ENCODE measurements at regions of chr20 and their contacts with region 1.

Region 1: DNA sequence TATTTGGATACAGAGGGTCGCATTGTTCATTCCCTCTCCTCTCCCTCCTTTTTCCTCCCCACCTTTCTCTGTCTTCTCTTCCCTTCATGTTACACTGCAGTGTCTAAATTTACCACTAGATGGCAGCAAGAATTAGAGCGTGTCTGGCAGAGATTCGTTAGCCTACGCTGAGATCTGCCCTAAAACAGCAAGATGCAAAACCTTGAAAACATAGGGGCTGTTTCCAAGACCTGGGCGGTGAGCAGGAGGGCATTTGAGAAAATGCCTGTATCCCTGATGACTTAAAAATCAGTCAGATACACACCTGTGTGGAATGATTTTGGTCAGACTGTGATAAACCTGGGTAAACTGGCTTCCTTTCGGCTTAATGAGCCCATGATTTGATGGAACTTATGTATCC is 101.5 kb upstream of the ISM1 start:
- DNase-seq: no peak
- ATAC-seq: peak; percentile 77
- H3K4me3 ChIP-seq: no peak overlapping the region
- H3K27ac ChIP-seq: no peak overlapping the region
- H3K4me1 ChIP-seq: no peaks in the 10 kb centered on the region
- H3K27me3 ChIP-seq: no peaks in the 10 kb centered on the region
- CTCF ChIP-seq: peak; percentile 78 to 93 (median 81)
- EP300 ChIP-seq: no peak
- POLR2A ChIP-seq: no peak
- RAD21 ChIP-seq: peak; percentile 95

Region 2: DNA sequence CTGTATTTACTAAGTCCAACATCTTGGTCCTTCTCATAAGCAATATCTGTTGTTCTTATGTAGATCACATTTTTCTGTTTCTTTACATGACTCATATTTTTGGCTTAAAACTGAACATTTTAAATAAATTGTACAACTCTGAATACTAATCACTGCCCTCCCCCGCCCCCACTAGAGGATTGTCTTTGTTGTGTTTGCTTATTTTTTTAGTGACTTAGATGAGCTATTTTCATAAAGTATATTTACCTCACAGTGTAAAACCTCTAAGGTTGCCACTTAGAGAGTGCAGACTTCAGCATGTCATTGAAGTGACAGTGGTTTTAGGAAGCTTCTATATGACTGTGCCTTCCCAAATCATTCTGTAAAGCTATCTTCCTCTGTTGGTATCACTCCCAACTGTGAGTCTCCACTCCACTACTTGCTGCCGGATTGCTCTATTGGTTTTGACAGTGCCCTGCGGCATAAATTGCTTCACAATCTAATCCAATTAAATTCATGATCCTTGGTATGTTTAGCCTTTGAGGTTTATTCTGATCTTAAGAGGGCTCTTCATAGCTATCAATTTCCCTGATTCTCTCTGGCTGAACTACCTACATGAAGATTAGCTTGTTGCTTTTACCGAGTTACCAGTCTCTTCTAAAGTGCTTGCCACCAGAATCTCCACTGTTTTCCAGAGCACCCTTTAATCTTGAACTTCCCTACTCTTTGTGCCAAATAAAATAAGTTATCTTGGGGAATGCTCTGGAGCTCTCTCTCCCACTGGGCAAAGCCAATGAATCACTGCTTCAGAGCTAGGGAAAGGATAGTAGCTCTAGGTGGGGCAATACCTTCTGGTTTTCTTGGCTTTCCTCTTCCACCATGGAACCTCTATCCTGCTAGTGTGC is 77.8 kb before region 1 on chr20:
- CTCF ChIA-PET with region 1: no interaction called
- POLR2A ChIA-PET with region 1: no interaction called
- RAD21 ChIA-PET with region 1: no interaction called
- SMC1A ChIA-PET with region 1: no interaction called
- in situ Hi-C with region 1: no loop called
- intact Hi-C with region 1: no loop called
- DNase-seq: no peak
- ATAC-seq: no peak
- H3K4me3 ChIP-seq: no peak overlapping the region
- H3K27ac ChIP-seq: no peak overlapping the region
- H3K4me1 ChIP-seq: no peaks in the 10 kb centered on the region
- H3K27me3 ChIP-seq: no peaks in the 10 kb centered on the region
- CTCF ChIP-seq: no peak
- EP300 ChIP-seq: no peak
- POLR2A ChIP-seq: no peak
- RAD21 ChIP-seq: no peak

Region 3: GRCh38 chr20:13261460-13262301 is 142.1 kb after region 1 on chr20:
- CTCF ChIA-PET with region 1: interaction called, 57 read pairs
- POLR2A ChIA-PET with region 1: no interaction called
- RAD21 ChIA-PET with region 1: interaction called, 7 read pairs
- SMC1A ChIA-PET with region 1: interaction called, 9 read pairs
- in situ Hi-C with region 1: no loop called
- intact Hi-C with region 1: loop called (anchors 1 kb)
- DNase-seq: no peak
- ATAC-seq: peak; percentile 94
- H3K4me3 ChIP-seq: no peak overlapping the region
- H3K27ac ChIP-seq: no peak overlapping the region
- H3K4me1 ChIP-seq: no peaks in the 10 kb centered on the region
- H3K27me3 ChIP-seq: no peaks in the 10 kb centered on the region
- CTCF ChIP-seq: peak; percentile 54 to 76 (median 75)
- EP300 ChIP-seq: no peak
- POLR2A ChIP-seq: no peak
- RAD21 ChIP-seq: peak; percentile 71

Region 4: GRCh38 chr20:13312300-13312699 is 192.7 kb after region 1 on chr20:
- CTCF ChIA-PET with region 1: interaction called, 3 read pairs
- POLR2A ChIA-PET with region 1: no interaction called
- RAD21 ChIA-PET with region 1: no interaction called
- SMC1A ChIA-PET with region 1: interaction called, 12 read pairs
- in situ Hi-C with region 1: no loop called
- intact Hi-C with region 1: no loop called
- DNase-seq: no peak
- ATAC-seq: peak; percentile 73
- H3K4me3 ChIP-seq: no peak overlapping the region
- H3K27ac ChIP-seq: no peak overlapping the region
- H3K4me1 ChIP-seq: no peaks in the 10 kb centered on the region
- H3K27me3 ChIP-seq: no peaks in the 10 kb centered on the region
- CTCF ChIP-seq: no peak
- EP300 ChIP-seq: no peak
- POLR2A ChIP-seq: no peak
- RAD21 ChIP-seq: no peak

Region 5: DNA sequence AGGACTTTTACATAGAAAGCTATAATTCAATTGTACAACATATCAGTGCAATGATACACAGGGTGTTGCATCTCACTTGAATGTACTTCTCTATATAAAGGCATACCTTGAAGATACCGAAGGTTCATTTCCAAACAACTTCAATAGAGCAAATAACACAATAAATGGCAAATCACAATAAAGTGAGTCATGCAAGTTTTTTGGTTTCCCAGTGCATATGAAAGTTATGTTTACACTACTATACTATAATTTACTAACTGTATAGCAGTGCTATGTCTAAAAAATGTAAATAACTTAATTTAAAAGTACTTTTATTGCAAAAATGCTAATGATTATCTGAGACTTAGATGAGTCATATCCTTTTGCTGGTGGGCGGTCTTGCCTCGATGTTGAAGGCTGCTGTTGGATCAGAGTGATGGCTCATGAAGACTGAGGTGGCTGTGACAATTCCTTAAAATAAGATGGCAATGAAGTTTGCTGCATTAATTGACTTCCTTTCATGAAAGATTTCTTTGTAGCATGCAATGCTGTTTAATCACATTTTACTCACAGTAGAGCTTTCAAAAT is 330.4 kb after region 1 on chr20:
- CTCF ChIA-PET with region 1: no interaction called
- POLR2A ChIA-PET with region 1: no interaction called
- RAD21 ChIA-PET with region 1: no interaction called
- SMC1A ChIA-PET with region 1: no interaction called
- in situ Hi-C with region 1: no loop called
- intact Hi-C with region 1: loop called (anchors 10 kb)
- DNase-seq: no peak
- ATAC-seq: no peak
- H3K4me3 ChIP-seq: no peak overlapping the region
- H3K27ac ChIP-seq: no peak overlapping the region
- H3K4me1 ChIP-seq: no peaks in the 10 kb centered on the region
- H3K27me3 ChIP-seq: no peaks in the 10 kb centered on the region
- CTCF ChIP-seq: no peak
- EP300 ChIP-seq: no peak
- POLR2A ChIP-seq: no peak
- RAD21 ChIP-seq: no peak

Region 6: DNA sequence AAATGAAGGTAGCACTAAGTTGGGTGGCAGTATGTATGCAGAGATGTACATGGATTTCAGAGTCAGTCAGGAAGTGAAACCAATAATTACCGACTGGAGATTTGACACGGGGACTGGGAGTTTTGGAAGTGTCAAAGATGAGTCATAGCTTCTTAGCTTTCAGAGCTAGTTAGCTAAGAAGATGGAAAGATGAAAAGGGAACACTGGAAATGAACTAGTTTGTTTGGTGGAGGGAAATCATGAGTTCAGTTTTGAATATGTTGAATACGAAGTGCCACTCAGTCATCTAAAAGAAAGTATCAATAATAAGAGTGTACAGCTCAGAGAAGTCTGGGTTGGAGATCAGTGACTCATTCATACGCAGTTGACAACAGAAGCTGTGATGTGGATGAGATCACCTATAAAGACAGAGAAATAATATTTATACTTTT is 657.6 kb after region 1 on chr20:
- CTCF ChIA-PET with region 1: interaction called, 14 read pairs
- POLR2A ChIA-PET with region 1: no interaction called
- RAD21 ChIA-PET with region 1: interaction called, 6 read pairs
- SMC1A ChIA-PET with region 1: interaction called, 15 read pairs
- in situ Hi-C with region 1: loop called (anchors 5 kb)
- intact Hi-C with region 1: loop called (anchors 5 kb)
- DNase-seq: no peak
- ATAC-seq: peak; percentile 57
- H3K4me3 ChIP-seq: no peak overlapping the region
- H3K27ac ChIP-seq: peak overlapping the region; percentile 15; the same call in 1 of the 2 replicates
- H3K4me1 ChIP-seq: peaks cover 13% of the 10 kb centered on the region; the same call in 1 of the 2 replicates
- H3K27me3 ChIP-seq: no peaks in the 10 kb centered on the region
- CTCF ChIP-seq: no peak
- EP300 ChIP-seq: no peak
- POLR2A ChIP-seq: no peak
- RAD21 ChIP-seq: no peak

Region 7: DNA sequence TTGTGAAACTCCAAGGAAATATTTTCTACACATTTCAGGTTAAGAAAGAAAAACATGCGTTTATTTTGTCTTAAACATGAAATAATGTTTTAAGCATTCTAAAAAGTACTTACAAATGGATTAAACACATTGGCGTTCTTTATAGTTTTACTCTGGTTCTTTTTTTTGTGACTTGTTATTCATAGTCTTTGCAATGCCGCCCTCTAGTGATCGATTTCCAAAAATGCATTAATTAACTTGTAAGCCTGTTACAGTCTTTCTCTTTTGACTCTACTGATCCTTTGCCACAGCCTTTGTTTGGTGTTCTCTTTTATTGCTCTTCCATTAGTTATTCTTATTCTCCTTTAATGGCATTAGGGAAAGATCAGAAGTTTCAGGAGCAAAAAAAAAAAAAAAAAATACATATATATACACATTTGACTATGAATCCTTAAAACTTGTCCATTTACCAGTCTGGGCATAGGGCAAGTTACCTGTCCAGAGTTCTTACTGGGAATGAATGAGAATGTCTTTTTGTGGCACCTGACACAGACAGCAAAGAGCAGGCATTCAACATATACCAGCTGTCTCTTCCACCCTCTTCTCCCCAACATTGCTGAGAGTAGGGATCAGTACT is 935.7 kb after region 1 on chr20:
- CTCF ChIA-PET with region 1: no interaction called
- POLR2A ChIA-PET with region 1: no interaction called
- RAD21 ChIA-PET with region 1: no interaction called
- SMC1A ChIA-PET with region 1: no interaction called
- in situ Hi-C with region 1: no loop called
- intact Hi-C with region 1: loop called (anchors 10 kb)
- DNase-seq: no peak
- ATAC-seq: peak; percentile 55
- H3K4me3 ChIP-seq: no peak overlapping the region
- H3K27ac ChIP-seq: no peak overlapping the region
- H3K4me1 ChIP-seq: no peaks in the 10 kb centered on the region
- H3K27me3 ChIP-seq: no peaks in the 10 kb centered on the region
- CTCF ChIP-seq: peak; percentile 47 to 71 (median 59)
- EP300 ChIP-seq: no peak
- POLR2A ChIP-seq: no peak
- RAD21 ChIP-seq: peak; percentile 77